Caco-2 (cell line): ENCODE measurements at regions of chr18 and their contacts with region 1.

Region 1: DNA sequence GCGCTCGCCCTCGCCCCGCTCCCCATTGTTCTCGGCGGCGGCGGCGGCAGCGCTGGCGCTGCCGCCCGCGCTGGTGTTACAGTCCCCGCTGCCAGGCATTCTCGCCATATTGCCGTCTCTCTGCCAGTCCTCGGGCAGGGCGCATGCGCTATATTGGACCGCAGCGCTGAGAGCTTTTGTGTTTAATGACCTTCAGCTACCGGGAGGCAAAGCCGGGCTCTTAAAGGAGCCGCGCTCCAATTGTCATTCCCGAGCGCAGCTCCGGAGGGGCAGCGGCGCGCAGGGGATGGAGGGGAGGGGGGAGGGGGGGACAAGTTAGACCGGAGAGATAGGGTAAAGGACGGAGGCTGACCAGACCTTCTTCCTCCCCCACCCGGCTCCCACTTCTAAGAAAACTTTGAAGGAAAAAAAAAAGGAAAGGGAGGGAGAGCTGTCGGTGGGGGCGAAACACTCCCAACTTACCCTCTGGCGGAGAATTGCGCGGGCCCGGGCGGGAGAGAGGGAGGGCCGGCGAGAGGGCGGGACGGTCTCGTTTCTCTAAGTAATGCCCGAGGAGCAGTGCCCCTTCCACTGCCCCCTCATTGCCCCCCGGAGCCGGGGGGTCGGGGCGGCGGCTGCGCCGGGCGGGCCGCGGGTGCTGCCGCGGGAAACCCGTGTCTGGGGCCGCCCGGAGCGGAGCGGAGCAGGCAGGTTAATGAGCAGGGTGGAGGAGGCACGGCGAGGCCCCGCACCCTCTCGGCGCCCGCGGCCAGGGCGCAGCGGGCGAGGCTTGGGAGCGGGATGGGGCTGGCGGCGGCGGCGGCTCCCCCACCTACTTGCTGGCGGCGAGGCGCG is at the start of gene KCTD1:
- DNase-seq: peak; percentile 65 to 75
- H3K4me3 ChIP-seq: peak within 1 kb of the TSS; percentile 45
- H3K4me3 Mint-ChIP-seq: peak within 1 kb of the TSS; percentile 75
- H3K27ac Mint-ChIP-seq: peak within 1 kb of the TSS; percentile 50
- H3K4me1 ChIP-seq: no peaks in the 10 kb centered on the region
- H3K4me1 Mint-ChIP-seq: peaks cover 6% of the 10 kb centered on the region
- H3K27me3 ChIP-seq: no peaks in the 10 kb centered on the region; the same call in 1 of the 2 replicates
- H3K27me3 Mint-ChIP-seq: peaks cover 9% of the 10 kb centered on the region
- CTCF ChIP-seq: no peak
- total RNA-seq, gene KCTD1: 5.7 and 6.8 TPM in 2 replicates

Region 2: DNA sequence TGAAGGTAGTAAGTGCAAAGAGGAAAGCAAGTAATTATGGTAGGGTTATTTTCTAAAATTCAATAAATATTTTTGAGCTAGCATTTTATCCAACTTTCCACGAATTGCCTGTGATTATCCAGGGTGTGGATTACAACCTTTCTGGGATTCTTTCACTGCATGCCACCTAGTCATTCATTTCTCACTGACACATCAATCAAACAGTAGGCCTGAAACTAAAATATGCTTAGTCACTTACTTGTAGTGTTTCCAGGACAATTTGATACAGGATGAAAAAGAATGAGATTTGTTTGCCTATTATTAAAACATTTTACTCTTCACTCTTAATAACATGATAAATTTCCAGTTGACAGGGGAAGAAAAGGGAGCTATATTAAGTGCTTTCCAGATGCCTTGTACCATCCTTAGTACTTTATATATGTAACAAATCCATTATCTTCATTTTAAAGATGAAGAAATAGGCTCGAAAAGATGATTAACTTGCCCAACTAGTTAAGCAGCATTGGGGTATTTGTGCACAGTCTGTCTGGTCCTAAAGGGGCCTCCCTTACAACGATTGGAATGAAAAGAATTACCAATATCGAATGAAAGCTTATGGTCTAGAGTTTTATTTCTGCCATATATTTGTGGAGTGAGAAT is 70.7 kb before region 1 on chr18:
- CTCF ChIA-PET with region 1: no interaction called
- POLR2A ChIA-PET with region 1: no interaction called
- intact Hi-C with region 1: loop called (anchors 1 kb)
- DNase-seq: peak in 1 of 2 experiments; percentile 26
- H3K4me3 ChIP-seq: no peak overlapping the region
- H3K4me3 Mint-ChIP-seq: no peak overlapping the region
- H3K27ac Mint-ChIP-seq: peak overlapping the region; percentile 56
- H3K4me1 ChIP-seq: peaks cover 52% of the 10 kb centered on the region
- H3K4me1 Mint-ChIP-seq: peaks cover 19% of the 10 kb centered on the region
- H3K27me3 ChIP-seq: no peaks in the 10 kb centered on the region
- H3K27me3 Mint-ChIP-seq: no peaks in the 10 kb centered on the region
- CTCF ChIP-seq: no peak

Region 3: DNA sequence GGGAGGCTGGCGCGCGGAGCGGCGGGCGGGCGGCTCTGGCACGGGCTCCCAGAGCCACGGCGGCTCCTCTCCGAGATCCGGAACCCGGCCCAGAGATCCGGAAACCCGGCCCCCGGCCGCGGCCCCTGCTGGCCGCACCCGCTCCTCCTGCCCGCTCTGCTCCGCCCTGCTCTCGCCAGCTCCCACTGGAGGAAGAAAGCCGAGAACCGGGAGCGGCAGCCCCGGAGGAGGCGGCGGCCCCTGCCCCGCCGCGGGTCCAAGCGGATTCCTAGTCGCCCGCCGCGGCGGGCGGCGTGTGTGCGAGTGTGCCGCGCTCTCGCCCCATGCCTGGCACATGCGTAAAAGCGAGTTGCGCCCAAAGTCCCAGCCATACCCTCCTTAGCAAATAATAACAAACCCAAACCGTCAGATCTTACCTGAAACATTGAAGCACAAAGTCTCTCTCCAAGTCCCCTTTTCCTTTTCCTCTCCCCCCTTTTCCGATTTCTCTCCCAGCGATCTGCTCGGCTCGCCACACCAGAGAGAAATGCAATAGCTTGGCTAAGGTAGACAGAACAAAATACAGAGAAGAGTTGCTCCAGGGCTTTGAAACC is 108.4 kb after region 1 on chr18:
- CTCF ChIA-PET with region 1: no interaction called
- POLR2A ChIA-PET with region 1: no interaction called
- intact Hi-C with region 1: loop called (anchors 10 kb)
- DNase-seq: peak; percentile 36 to 57
- H3K4me3 ChIP-seq: peak overlapping the region; percentile 44
- H3K4me3 Mint-ChIP-seq: peak overlapping the region; percentile 85
- H3K27ac Mint-ChIP-seq: no peak overlapping the region
- H3K4me1 ChIP-seq: no peaks in the 10 kb centered on the region
- H3K4me1 Mint-ChIP-seq: no peaks in the 10 kb centered on the region
- H3K27me3 ChIP-seq: no peaks in the 10 kb centered on the region
- H3K27me3 Mint-ChIP-seq: peaks cover 11% of the 10 kb centered on the region
- CTCF ChIP-seq: no peak

Region 4: DNA sequence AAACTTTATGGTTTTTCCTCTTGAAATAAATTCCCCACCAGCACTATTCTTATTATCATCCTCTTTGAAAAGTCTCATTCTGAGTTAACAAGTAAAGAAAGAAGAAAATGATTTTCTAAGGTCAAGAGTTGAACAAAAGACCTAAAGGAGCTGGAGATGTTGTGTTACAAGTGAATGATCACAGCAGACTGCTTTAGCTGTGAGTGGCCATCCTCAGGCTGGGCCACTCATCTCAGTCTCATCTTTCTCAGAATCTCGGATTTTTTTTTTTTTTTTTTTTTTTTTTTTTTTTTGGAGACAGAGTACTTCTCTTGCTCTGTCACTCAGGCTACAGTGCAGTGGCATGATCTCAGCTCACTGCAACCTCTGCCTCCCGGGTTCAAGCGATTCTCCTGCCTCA is 1495.0 kb after region 1 on chr18:
- CTCF ChIA-PET with region 1: interaction called, 11 read pairs
- POLR2A ChIA-PET with region 1: no interaction called
- intact Hi-C with region 1: no loop called
- DNase-seq: no peak
- H3K4me3 ChIP-seq: no peak overlapping the region
- H3K4me3 Mint-ChIP-seq: no peak overlapping the region
- H3K27ac Mint-ChIP-seq: no peak overlapping the region
- H3K4me1 ChIP-seq: no peaks in the 10 kb centered on the region
- H3K4me1 Mint-ChIP-seq: peaks cover 6% of the 10 kb centered on the region
- H3K27me3 ChIP-seq: no peaks in the 10 kb centered on the region
- H3K27me3 Mint-ChIP-seq: no peaks in the 10 kb centered on the region
- CTCF ChIP-seq: no peak